ENCODE measurements at regions of chr3 and their contacts with region 1.

Region 1: GRCh38 chr3:137105277-137105977 is 147.6 kb downstream of the IL20RB start:
- DNase-seq: no peak
- ATAC-seq: no peak
- H3K4me3 Mint-ChIP-seq: no peak overlapping the region
- H3K27ac Mint-ChIP-seq: no peak overlapping the region
- H3K4me1 Mint-ChIP-seq: no peaks in the 10 kb centered on the region
- H3K27me3 Mint-ChIP-seq: peaks cover 4% of the 10 kb centered on the region
- CTCF ChIP-seq: peak; percentile 31

Region 2: DNA sequence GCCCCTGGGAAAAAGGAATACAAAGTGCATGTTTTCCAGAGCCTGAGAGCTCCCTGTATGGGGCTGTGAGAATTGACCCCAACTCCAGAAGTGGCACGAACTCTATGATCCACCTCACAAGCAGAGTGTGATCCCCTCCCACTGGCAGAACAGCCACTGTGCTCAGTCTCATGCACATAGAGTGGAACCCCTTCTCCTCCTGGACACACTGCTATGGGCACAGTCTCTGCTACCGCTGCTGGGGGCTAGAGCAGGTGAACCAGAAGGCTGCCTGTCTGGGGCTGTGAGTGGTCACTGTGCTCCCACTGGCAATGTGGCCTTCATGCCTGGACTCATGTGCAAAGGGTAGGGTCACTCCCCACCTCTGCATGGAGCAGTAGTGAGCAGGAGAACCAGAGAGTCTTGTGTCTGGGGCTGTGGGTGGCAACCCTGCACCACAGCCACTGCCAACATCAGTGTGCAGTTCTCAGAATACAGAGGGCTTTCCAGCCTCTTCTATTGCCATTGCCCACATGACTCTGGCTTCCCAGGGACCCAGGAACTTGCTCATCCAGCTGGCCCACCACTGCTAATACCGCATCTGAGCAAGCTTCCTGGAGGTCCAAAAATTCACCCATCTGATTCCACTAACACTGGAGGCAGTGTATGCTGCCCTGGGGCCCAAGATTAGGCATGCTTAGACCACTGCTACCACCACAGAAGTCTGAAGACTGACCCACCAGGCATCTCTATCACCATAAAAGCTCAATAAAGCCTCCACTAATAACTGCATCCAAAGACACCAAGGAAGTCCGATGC is 315.0 kb after region 1 on chr3:
- CTCF ChIA-PET with region 1: no interaction called
- POLR2A ChIA-PET with region 1: no interaction called
- intact Hi-C with region 1: no loop called
- DNase-seq: no peak
- ATAC-seq: no peak
- H3K4me3 Mint-ChIP-seq: no peak overlapping the region
- H3K27ac Mint-ChIP-seq: no peak overlapping the region
- H3K4me1 Mint-ChIP-seq: no peaks in the 10 kb centered on the region
- H3K27me3 Mint-ChIP-seq: no peaks in the 10 kb centered on the region
- CTCF ChIP-seq: no peak

Region 3: GRCh38 chr3:137946345-137946973 is 841.0 kb after region 1 on chr3:
- CTCF ChIA-PET with region 1: interaction called, 3 read pairs
- POLR2A ChIA-PET with region 1: no interaction called
- intact Hi-C with region 1: loop called (anchors 1 kb)
- DNase-seq: no peak
- ATAC-seq: no peak
- H3K4me3 Mint-ChIP-seq: no peak overlapping the region
- H3K27ac Mint-ChIP-seq: no peak overlapping the region
- H3K4me1 Mint-ChIP-seq: peaks cover 2% of the 10 kb centered on the region
- H3K27me3 Mint-ChIP-seq: no peaks in the 10 kb centered on the region
- CTCF ChIP-seq: no peak

Region 4: GRCh38 chr3:137970914-137971831 is 865.7 kb after region 1 on chr3:
- CTCF ChIA-PET with region 1: interaction called, 4 read pairs
- POLR2A ChIA-PET with region 1: no interaction called
- intact Hi-C with region 1: loop called (anchors 1 kb)
- DNase-seq: no peak
- ATAC-seq: no peak
- H3K4me3 Mint-ChIP-seq: no peak overlapping the region
- H3K27ac Mint-ChIP-seq: no peak overlapping the region
- H3K4me1 Mint-ChIP-seq: no peaks in the 10 kb centered on the region
- H3K27me3 Mint-ChIP-seq: peaks cover 7% of the 10 kb centered on the region
- CTCF ChIP-seq: no peak

Region 5: DNA sequence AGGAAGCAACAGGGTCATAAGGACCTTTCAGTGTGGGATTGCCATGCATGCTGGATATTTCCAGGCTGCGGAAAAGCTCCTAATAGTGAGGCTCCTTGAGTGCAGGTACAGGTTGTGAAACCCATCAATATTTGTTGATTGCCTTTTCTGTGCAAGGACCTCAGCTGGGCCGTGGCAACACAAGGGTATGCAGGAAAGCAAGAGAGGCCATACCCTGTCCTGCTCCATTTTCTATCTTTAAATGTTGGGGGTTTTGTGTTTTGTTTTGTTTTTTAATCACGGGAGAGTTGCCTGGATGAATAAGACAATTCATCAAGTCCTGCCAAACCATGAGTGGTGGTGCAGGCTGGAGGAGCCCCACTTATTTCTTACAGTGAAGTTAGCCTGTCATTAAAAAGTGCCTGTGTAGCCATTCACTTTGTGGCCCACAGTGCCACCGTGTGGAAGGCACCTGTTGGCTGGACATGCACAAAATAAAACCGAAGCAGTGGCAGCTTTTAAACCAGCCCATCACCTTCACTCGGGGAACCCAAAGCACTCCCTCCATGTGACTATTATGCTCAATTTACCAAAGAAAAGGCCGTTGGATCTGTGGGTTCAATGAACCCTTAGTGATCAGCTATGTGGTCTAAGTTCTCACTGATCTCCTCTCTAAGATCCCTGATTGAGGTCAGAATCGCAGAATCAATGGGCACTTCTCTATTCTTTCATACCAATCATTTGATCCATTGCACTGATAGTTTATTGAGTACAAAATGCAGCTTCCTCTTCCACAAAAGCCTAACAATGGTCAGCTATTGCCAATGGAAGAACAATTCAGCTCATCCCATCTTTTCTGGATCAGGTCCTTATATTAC is 946.7 kb after region 1 on chr3:
- CTCF ChIA-PET with region 1: interaction called, 3 read pairs
- POLR2A ChIA-PET with region 1: no interaction called
- intact Hi-C with region 1: loop called (anchors 5 kb)
- DNase-seq: no peak
- ATAC-seq: no peak
- H3K4me3 Mint-ChIP-seq: no peak overlapping the region
- H3K27ac Mint-ChIP-seq: no peak overlapping the region
- H3K4me1 Mint-ChIP-seq: no peaks in the 10 kb centered on the region
- H3K27me3 Mint-ChIP-seq: peaks cover 31% of the 10 kb centered on the region
- CTCF ChIP-seq: no peak